Activated CD4-positive, alpha-beta T cell treated with anti-CD3 and anti-CD28 coated beads, Interleukin-2, amount 10 ng/mL, durations not matched to agents 24 days and 14 days (primary cell): ENCODE measurements at regions of chr9 and their contacts with region 1.

Region 1: GRCh38 chr9:76458903-76459690 is at the start of gene GCNT1:
- DNase-seq: peak; percentile 99
- H3K4me3 Mint-ChIP-seq: peak within 1 kb of the TSS; percentile 92
- H3K27ac Mint-ChIP-seq: peak within 1 kb of the TSS; percentile 88
- H3K4me1 Mint-ChIP-seq: peaks cover 28% of the 10 kb centered on the region
- H3K27me3 Mint-ChIP-seq: no peaks in the 10 kb centered on the region
- total RNA-seq, gene GCNT1: 7.0 and 9.8 TPM in 2 replicates

Region 2: DNA sequence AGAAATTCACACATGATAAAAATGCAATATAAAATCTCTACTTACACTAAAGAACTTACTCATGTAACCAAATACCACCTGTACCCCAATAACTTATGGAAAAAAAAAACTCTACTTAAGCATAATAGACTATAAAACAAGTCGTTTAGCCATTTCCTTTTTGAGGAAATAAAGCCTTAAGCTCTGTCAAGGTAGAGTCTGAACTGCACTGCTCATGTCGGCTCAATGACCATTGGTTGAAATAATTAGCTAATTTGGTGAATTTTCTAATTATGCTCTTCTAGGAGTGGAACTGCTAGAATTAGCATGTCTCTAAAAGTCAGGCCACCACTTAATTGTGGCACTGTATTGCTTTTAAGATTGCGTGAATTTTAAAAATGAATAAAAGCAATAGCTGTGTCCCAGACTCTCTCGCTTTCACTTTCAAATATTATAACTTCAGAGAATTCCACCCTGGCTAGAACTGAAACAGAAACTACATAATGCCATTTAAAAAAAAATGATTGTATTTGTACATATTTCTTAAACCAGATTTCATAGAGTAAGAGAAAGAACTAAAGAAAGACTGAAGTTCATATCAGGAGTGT is 192.1 kb after region 1 on chr9:
- intact Hi-C with region 1: loop called (anchors 1 kb)
- DNase-seq: no peak
- H3K4me3 Mint-ChIP-seq: peak overlapping the region; percentile 65
- H3K27ac Mint-ChIP-seq: no peak overlapping the region
- H3K4me1 Mint-ChIP-seq: peaks cover 36% of the 10 kb centered on the region
- H3K27me3 Mint-ChIP-seq: peaks cover 2% of the 10 kb centered on the region

Region 3: GRCh38 chr9:76756268-76756640 is 297.2 kb after region 1 on chr9:
- intact Hi-C with region 1: no loop called
- DNase-seq: no peak
- H3K4me3 Mint-ChIP-seq: no peak overlapping the region
- H3K27ac Mint-ChIP-seq: no peak overlapping the region
- H3K4me1 Mint-ChIP-seq: no peaks in the 10 kb centered on the region
- H3K27me3 Mint-ChIP-seq: no peaks in the 10 kb centered on the region